Esophagus squamous epithelium (tissue), 5 donors: ENCODE measurements at regions of chr1 and their contacts with region 1.

Region 1: DNA sequence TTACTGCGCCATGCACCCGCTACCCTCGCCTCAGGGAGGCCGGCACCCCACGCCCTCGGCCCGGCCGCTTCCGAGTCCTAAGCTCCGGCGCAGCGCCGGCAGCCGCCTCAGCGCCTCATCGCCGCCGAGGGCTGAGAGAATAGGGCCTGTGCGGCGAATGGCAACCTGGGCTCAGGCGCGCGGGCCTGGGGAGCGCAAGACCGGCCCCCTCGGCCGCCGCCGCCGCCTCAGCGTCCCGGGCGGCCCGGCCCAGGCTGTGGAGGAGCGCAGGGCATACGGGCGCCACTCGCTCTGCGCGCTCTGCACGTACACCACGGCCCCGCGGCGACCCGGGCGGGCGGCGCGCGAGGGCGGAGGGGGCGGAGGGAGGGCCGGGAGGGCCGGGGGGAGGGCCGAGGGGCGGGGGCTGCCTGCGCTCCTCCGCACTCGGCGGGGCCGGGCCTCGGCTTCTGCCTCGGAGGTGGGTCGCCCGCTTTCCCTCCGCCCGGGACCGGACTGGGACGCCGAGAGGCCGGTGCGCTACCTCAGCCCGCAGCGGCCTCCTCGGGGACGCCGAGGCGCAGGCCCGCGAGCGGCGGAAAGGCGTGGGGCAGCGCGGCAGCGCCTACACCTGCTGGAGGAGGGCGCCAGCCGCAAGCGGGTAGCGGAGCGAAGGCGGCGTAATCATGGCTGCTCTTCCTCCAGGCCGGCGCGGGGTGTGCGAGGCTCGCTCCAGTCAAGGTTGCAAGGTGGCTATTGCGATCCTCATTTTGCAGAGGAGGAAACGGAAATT is at the start of gene EGLN1:
- DNase-seq: peak; percentile 30
- H3K4me3 ChIP-seq: peak within 1 kb of the TSS; percentile 65 to 96 (median 70)
- H3K27ac ChIP-seq: peak within 1 kb of the TSS; percentile 88 to 99 (median 98)
- H3K4me1 ChIP-seq: peaks cover 23 to 48% (median 24%) of the 10 kb centered on the region in 3 donors
- H3K27me3 ChIP-seq: no peaks in the 10 kb centered on the region
- CTCF ChIP-seq: peak in 3 of 6 experiments; percentile 14 to 40 (median 37)
- POLR2A ChIP-seq: peak in 2 of 4 donors; percentile 78 to 89
- total RNA-seq, gene EGLN1: 21.8 to 36.0 (median 28.7) TPM

Region 2: DNA sequence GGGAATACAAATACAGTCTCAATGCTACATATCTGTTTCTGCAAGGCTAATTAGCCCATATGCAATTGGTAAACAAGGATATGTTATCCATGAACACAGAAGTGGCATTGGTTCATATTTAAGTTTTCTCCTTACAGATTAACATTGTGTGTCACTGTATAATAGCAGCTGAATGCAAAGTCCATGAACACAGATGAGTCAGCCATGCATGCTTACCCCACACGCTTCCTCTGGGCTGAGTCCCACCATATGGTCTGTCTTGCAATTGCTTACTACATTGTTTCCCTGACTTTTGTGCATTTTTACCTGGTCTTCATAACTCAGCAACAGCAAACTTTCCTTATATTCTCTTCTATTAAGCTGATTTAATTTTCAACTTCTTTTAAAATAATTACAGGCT is 64.8 kb after region 1 on chr1:
- intact Hi-C with region 1: no loop called
- DNase-seq: no peak
- H3K4me3 ChIP-seq: no peak overlapping the region
- H3K27ac ChIP-seq: no peak overlapping the region
- H3K4me1 ChIP-seq: no peaks in the 10 kb centered on the region
- H3K27me3 ChIP-seq: peaks cover 0 to 5% (median 0%) of the 10 kb centered on the region in 4 donors
- CTCF ChIP-seq: no peak
- POLR2A ChIP-seq: no peak

Region 3: GRCh38 chr1:231528172-231529029 is 106.2 kb after region 1 on chr1 and contains the start of gene TSNAX:
- intact Hi-C with region 1: loop called (anchors 10 kb)
- DNase-seq: peak; percentile 69
- H3K4me3 ChIP-seq: peak within 1 kb of the TSS; percentile 51 to 92 (median 68)
- H3K27ac ChIP-seq: peak within 1 kb of the TSS; percentile 81 to 95 (median 92)
- H3K4me1 ChIP-seq: peaks cover 4 to 48% (median 24%) of the 10 kb centered on the region in 3 donors
- H3K27me3 ChIP-seq: no peaks in the 10 kb centered on the region
- CTCF ChIP-seq: peak in 1 of 6 experiments; percentile 8
- POLR2A ChIP-seq: peak in 2 of 4 donors; percentile 82 to 83
- total RNA-seq, gene TSNAX: 11.6 to 28.4 (median 22.3) TPM